Breast epithelium (tissue), 4 donors: ENCODE measurements at regions of chr22 and their contacts with region 1.

Region 1: DNA sequence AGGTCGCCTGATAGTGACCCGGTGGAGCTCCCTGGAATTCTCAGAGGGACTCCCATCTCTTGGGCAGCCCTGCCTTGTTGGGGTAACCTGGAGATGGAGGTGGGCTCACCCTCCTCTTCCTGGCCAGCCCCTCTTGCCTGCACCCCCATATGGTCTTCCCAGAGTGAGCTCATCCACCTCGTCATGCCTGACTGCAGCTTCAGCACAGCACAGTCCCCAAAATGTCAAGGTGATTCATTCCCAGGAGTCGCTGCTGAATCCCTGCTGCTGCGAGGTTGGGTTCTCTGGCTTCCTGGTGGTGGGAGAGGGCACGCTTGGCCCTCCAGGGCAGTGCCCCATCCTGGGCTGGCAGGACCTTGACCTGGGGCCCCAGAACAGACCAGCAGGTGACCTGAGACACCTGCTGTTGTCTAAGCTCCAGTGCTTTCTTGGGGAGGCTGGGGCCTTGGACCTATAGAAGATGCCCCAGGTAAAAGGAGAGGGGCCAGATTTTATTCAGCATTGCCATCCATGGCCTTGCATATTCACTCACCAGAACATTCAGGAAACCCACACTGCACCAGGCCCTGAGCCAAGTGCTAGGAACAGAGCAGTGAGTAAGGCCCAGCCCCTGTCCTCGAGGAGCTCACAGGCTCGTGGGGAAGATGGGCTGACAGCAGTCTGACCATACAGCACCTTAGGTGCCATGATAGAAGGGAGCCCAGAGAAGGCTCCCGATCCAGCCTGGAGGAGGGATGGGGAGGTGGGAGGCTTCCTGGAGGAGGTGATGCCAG is 72.9 kb downstream of the CACNA1I start:
- DNase-seq: no peak
- H3K4me3 ChIP-seq: no peak overlapping the region
- H3K27ac ChIP-seq: no peak overlapping the region
- H3K4me1 ChIP-seq: no peaks in the 10 kb centered on the region
- H3K27me3 ChIP-seq: peaks cover 0 to 4% of the 10 kb centered on the region in 2 donors
- CTCF ChIP-seq: no peak
- POLR2A ChIP-seq: no peak

Region 2: GRCh38 chr22:38403812-38404211 is 1239.7 kb before region 1 on chr22:
- intact Hi-C with region 1: no loop called
- DNase-seq: peak in 1 of 2 donors; percentile 16
- H3K4me3 ChIP-seq: no peak overlapping the region
- H3K27ac ChIP-seq: no peak overlapping the region
- H3K4me1 ChIP-seq: no peaks in the 10 kb centered on the region
- H3K27me3 ChIP-seq: no peaks in the 10 kb centered on the region
- CTCF ChIP-seq: no peak
- POLR2A ChIP-seq: no peak

Region 3: GRCh38 chr22:38740754-38741153 is 902.7 kb before region 1 on chr22:
- intact Hi-C with region 1: loop called (anchors 5 kb)
- DNase-seq: no peak
- H3K4me3 ChIP-seq: no peak overlapping the region
- H3K27ac ChIP-seq: no peak overlapping the region
- H3K4me1 ChIP-seq: no peaks in the 10 kb centered on the region
- H3K27me3 ChIP-seq: no peaks in the 10 kb centered on the region
- CTCF ChIP-seq: no peak
- POLR2A ChIP-seq: no peak

Region 4: DNA sequence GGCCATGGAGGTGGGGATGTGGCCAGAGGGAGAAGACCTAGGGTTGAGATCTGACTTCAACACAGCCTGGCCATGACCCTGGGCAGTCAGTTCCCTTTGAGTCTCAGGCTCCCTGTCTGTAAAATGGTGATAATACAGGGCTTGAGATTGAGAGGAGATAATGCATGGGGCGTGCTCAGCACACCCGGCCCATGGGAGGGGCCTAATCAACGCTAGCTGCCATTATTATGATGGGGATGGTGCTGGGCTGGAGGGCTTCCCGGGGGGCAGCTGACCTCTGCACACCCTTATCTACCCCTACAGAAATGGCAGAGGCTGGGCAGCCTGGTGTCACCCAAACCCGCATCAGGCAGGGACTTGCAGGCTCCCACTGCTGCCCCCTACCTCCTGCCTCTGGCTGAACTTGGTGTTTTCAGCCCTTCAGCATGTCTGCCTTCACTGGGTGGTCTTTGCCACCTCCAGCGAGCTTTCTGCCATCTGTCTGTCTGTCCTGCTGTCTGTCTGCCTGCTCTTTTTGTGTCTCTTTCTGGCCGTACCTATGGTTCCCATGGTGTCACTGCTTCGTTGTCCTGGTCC is 11.6 kb after region 1 on chr22:
- intact Hi-C with region 1: no loop called
- DNase-seq: no peak
- H3K4me3 ChIP-seq: no peak overlapping the region
- H3K27ac ChIP-seq: no peak overlapping the region
- H3K4me1 ChIP-seq: no peaks in the 10 kb centered on the region
- H3K27me3 ChIP-seq: peaks cover 0 to 23% of the 10 kb centered on the region in 2 donors
- CTCF ChIP-seq: no peak
- POLR2A ChIP-seq: no peak